ENCODE measurements at regions of chr13 and their contacts with region 1.

Region 1: GRCh38 chr13:80979035-80979641 is 638.2 kb upstream of the SPRY2 start:
- DNase-seq: peak; percentile 82

Region 2: DNA sequence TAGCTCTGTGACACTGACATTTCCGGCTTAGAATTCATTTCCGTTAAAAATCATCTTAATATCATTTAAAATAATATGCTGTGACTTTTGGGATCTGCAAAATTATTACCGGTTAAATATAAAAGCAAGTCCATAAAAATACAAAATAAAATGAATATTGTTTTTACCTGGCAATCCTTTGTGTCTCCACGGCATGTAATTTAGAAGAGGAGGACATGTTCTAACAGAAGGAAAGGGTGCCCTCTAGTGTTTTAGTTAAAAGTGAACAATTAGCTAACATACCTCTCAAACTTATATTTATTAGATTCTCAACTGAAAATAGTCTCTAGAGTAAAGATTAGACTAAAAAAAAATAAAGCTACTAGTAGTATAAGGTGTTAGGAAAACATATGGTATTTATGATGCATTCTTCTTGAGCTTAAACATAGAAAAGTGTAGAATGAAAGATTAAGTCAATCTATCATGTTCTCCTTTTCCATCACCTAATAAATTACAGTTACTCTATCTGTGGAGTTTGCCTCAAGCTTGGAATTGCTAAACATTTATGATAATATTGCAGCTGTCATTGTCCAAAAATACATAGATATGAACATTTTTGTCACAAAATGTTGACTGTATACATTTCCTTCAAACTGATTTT is 38.5 kb after region 1 on chr13:
- CTCF ChIA-PET with region 1: interaction called, 18 read pairs
- POLR2A ChIA-PET with region 1: no interaction called
- DNase-seq: peak; percentile 63

Region 3: DNA sequence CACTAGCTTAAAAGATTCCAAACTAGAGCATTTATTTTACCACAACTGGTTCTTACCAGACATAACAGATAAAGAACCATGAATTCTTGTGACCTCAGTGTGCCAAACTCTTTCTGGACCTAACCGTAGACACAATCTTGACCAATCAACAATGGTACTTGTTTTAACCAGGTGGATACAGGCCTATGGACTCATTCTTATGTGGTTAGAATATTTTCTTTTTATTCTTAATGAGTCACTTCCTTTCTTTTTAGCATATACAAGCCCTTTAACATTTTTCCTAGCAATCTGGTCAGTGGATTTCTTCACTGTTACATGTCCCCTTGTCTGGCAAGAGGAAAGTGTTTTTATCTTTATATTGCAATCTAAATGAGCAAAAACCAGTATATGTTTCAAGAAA is 153.9 kb after region 1 on chr13:
- CTCF ChIA-PET with region 1: no interaction called
- POLR2A ChIA-PET with region 1: no interaction called
- DNase-seq: no peak

Region 4: DNA sequence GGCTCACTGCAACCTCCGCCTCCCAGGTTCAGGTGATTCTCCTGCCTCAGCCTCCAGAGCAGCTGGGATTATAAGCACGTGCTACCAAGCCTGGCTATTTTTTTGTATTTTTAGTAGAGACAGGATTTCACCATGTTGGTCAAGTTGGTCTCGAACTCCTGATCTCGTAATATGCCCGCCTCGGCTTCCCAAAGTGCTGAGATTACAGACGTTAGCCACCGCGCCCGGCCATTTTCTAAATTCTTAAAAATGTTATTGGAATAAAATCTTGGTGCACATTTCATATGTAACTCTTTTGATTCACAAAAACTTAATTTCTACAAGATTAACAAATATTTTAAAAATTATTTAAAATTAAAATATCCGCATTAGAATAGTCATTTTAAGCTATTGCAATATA is 842.1 kb after region 1 on chr13:
- CTCF ChIA-PET with region 1: no interaction called
- POLR2A ChIA-PET with region 1: no interaction called
- DNase-seq: no peak

Measured in HEK293T (cell line).